CD4-positive, alpha-beta memory T cell (primary cell): ENCODE measurements at regions of chr11 and their contacts with region 1.

Region 1: GRCh38 chr11:118051611-118052461 is 25.0 kb upstream of the TMPRSS4 start:
- DNase-seq: peak; percentile 86 to 91 (median 89)
- H3K4me3 ChIP-seq: peak overlapping the region in 1 of 2 donors; percentile 33
- H3K4me3 Mint-ChIP-seq: peak overlapping the region in 7 of 8 donors; percentile 69 to 93 (median 80)
- H3K27ac ChIP-seq: peak overlapping the region; percentile 57
- H3K27ac Mint-ChIP-seq: peak overlapping the region; percentile 95 to 100 (median 99)
- H3K4me1 ChIP-seq: peaks cover 67% of the 10 kb centered on the region
- H3K4me1 Mint-ChIP-seq: peaks cover 45 to 68% (median 59%) of the 10 kb centered on the region in 4 donors
- H3K27me3 ChIP-seq: no peaks in the 10 kb centered on the region
- H3K27me3 Mint-ChIP-seq: peaks cover 0 to 2% of the 10 kb centered on the region in 2 donors

Region 2: GRCh38 chr11:117426269-117426685 is 625.6 kb before region 1 on chr11:
- CTCF ChIA-PET with region 1: interaction called, 28 read pairs
- POLR2A ChIA-PET with region 1: interaction called, 3 read pairs
- intact Hi-C with region 1: no loop called
- DNase-seq: peak in 4 of 5 donors; percentile 42 to 59 (median 52)
- H3K4me3 ChIP-seq: no peak overlapping the region
- H3K4me3 Mint-ChIP-seq: peak overlapping the region in 4 of 8 donors; percentile 6 to 60 (median 36)
- H3K27ac ChIP-seq: no peak overlapping the region
- H3K27ac Mint-ChIP-seq: no peak overlapping the region
- H3K4me1 ChIP-seq: peaks cover 6% of the 10 kb centered on the region
- H3K4me1 Mint-ChIP-seq: peaks cover 0 to 13% (median under 1%) of the 10 kb centered on the region in 4 donors
- H3K27me3 ChIP-seq: no peaks in the 10 kb centered on the region
- H3K27me3 Mint-ChIP-seq: peaks cover 0 to 1% of the 10 kb centered on the region in 2 donors

Region 3: DNA sequence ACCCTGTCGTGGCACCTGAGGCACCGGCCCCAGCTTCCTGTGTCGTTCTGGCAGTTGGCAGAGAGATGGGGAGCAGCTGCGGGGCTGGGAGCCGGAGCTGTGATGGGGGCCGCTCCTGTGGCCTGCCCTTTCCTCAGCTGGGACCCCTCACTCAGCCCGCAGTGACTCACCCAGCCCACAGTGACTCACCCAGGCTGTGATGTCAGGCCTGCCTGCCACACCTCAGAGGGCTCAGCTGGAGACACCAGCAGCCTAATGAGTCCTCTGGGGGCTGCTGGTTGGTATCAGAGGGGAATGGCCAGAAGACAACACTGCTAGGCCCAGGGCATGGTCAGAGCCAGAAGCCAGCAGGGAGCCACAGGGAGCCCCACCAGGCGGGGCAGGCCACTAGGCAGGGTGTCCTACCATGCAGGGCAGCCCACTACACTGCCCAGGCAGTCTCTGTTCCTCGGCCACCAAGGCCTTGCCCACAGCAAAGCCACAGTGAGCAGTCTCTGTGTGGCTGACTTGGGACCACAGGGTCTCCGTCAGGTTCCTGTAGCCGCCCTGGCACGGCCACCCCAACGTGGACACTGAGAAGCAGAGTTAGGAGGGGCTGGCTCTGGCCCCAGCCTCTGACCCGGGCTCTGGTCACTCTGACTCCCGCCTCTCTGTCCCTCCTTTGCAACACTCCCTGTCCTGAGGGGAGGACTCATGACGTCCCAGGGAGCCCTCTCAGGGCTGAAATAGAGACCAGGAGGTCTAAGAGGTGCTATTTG is 223.0 kb before region 1 on chr11:
- CTCF ChIA-PET with region 1: interaction called, 22 read pairs
- POLR2A ChIA-PET with region 1: interaction called, 6 read pairs
- intact Hi-C with region 1: loop called (anchors 1 kb)
- DNase-seq: peak; percentile 49 to 91 (median 59)
- H3K4me3 ChIP-seq: no peak overlapping the region
- H3K4me3 Mint-ChIP-seq: peak overlapping the region in 4 of 8 donors; percentile 24 to 65 (median 44)
- H3K27ac ChIP-seq: peak overlapping the region; percentile 44
- H3K27ac Mint-ChIP-seq: peak overlapping the region; percentile 65 to 87 (median 79)
- H3K4me1 ChIP-seq: peaks cover 40% of the 10 kb centered on the region
- H3K4me1 Mint-ChIP-seq: peaks cover 19 to 69% (median 40%) of the 10 kb centered on the region in 4 donors
- H3K27me3 ChIP-seq: no peaks in the 10 kb centered on the region
- H3K27me3 Mint-ChIP-seq: no peaks in the 10 kb centered on the region

Region 4: GRCh38 chr11:117932067-117932370 is 119.8 kb before region 1 on chr11:
- CTCF ChIA-PET with region 1: interaction called, 21 read pairs
- POLR2A ChIA-PET with region 1: interaction called, 8 read pairs
- intact Hi-C with region 1: no loop called
- DNase-seq: peak in 3 of 5 donors; percentile 19 to 29 (median 26)
- H3K4me3 ChIP-seq: no peak overlapping the region
- H3K4me3 Mint-ChIP-seq: peak overlapping the region in 4 of 8 donors; percentile 15 to 59 (median 29)
- H3K27ac ChIP-seq: no peak overlapping the region
- H3K27ac Mint-ChIP-seq: peak overlapping the region in 5 of 7 donors; percentile 9 to 70 (median 65)
- H3K4me1 ChIP-seq: peaks cover 42% of the 10 kb centered on the region
- H3K4me1 Mint-ChIP-seq: peaks cover 25 to 56% (median 47%) of the 10 kb centered on the region in 4 donors
- H3K27me3 ChIP-seq: peaks cover 3% of the 10 kb centered on the region
- H3K27me3 Mint-ChIP-seq: no peaks in the 10 kb centered on the region

Region 5: DNA sequence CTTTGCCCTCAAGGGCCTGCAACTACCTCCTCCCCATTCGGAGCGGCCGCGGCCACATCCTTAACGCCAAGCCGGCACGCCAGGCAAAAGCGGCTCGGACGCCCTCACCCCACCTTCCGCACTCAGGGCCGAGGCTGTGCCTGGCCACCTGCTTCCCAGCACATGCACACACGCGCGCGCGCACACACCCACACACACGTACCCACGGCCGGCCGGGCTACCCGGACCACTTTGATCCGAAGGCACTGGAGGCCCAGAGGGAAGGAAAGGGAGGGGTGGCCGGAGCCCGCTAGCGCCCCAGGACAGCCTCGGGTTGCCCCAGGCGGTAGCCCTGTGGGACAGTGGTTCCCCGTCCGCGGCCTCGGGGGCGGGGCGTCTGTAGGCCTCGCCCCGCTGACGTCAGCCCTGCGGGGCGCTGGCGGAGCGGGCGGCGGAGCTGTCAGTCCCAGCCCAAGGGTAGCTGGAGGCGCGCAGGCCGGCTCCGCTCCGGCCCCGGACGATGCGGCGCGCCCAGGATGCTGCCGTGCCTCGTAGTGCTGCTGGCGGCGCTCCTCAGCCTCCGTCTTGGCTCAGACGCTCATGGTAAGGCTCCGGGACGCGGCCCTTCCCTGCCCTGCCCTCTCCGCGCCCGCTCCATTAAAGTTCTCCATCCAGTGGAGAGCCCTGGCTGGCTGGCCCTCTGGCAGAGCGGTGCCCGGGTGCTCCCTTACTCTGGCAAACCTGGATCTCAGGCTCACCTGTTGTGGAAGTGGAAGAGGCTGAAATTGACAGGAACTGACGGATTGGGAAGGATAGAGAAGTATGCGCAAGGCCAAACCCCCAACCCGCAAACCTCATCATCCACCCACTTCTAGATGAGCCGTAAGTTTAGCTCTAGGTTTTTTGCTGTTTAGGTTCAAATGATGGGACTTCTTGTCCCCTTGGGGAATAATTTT is 65.6 kb before region 1 on chr11 and contains the start of gene IL10RA:
- CTCF ChIA-PET with region 1: interaction called, 211 read pairs
- POLR2A ChIA-PET with region 1: interaction called, 1,775 read pairs
- intact Hi-C with region 1: loop called (anchors 1 kb)
- DNase-seq: peak; percentile 82 to 85 (median 84)
- H3K4me3 ChIP-seq: peak within 1 kb of the TSS; percentile 97 to 99
- H3K4me3 Mint-ChIP-seq: peak within 1 kb of the TSS; percentile 91 to 100 (median 94)
- H3K27ac ChIP-seq: peak within 1 kb of the TSS; percentile 98
- H3K27ac Mint-ChIP-seq: peak within 1 kb of the TSS; percentile 89 to 98 (median 96)
- H3K4me1 ChIP-seq: peaks cover 60% of the 10 kb centered on the region
- H3K4me1 Mint-ChIP-seq: peaks cover 41 to 86% (median 57%) of the 10 kb centered on the region in 4 donors
- H3K27me3 ChIP-seq: no peaks in the 10 kb centered on the region
- H3K27me3 Mint-ChIP-seq: no peaks in the 10 kb centered on the region
- total RNA-seq, gene IL10RA: 398 to 406 TPM

Region 6: GRCh38 chr11:118092907-118093571 is 41.2 kb after region 1 on chr11:
- CTCF ChIA-PET with region 1: no interaction called
- POLR2A ChIA-PET with region 1: no interaction called
- intact Hi-C with region 1: no loop called
- DNase-seq: no peak
- H3K4me3 ChIP-seq: no peak overlapping the region
- H3K4me3 Mint-ChIP-seq: no peak overlapping the region
- H3K27ac ChIP-seq: no peak overlapping the region
- H3K27ac Mint-ChIP-seq: no peak overlapping the region
- H3K4me1 ChIP-seq: no peaks in the 10 kb centered on the region
- H3K4me1 Mint-ChIP-seq: no peaks in the 10 kb centered on the region
- H3K27me3 ChIP-seq: no peaks in the 10 kb centered on the region
- H3K27me3 Mint-ChIP-seq: peaks cover 5 to 16% of the 10 kb centered on the region in 2 donors

Region 7: DNA sequence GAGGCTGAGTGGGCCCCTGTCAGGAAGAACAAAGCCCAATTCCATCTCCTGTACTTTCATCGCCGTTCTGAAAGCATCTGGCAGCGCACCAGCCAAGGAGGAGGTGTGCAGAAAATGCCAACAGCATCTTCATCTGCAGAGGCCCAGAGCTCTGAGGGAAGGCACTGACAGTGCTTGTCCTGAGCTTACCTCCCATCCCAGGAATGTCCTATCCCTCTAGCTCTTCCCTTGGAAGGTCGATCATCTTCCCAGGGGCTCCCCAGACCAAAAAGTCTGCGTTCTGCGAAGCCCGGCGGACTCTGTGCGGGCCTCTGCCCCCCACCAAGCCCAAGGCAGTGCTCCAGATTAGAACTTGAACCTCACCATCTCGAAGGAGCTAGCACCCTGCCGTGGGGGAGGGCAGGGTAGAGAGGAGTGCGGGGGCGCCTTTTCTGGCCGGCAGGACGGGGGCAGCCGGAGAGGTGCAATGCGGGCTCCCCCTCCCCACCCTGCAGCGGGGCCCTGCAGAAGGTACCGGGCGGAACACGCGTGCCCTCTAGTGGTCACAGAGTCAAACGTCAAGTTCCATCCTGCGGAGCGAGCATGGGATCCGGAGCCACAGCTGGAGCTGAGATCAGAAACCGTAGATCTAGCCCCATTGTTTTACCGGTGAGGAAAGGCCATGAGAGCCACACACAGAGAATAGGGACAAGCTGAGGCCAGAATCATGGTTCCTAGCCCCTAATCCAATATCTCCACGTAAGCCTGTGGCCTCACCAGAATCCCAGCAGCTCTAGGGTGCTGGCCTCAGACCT is 119.6 kb after region 1 on chr11:
- CTCF ChIA-PET with region 1: interaction called, 14 read pairs
- POLR2A ChIA-PET with region 1: interaction called, 4 read pairs
- intact Hi-C with region 1: no loop called
- DNase-seq: peak; percentile 63 to 72 (median 65)
- H3K4me3 ChIP-seq: no peak overlapping the region
- H3K4me3 Mint-ChIP-seq: peak overlapping the region in 2 of 8 donors; percentile 9 to 12
- H3K27ac ChIP-seq: no peak overlapping the region
- H3K27ac Mint-ChIP-seq: no peak overlapping the region
- H3K4me1 ChIP-seq: peaks cover 8% of the 10 kb centered on the region
- H3K4me1 Mint-ChIP-seq: peaks cover 0 to 5% (median 2%) of the 10 kb centered on the region in 4 donors
- H3K27me3 ChIP-seq: no peaks in the 10 kb centered on the region
- H3K27me3 Mint-ChIP-seq: peaks cover 4 to 15% of the 10 kb centered on the region in 2 donors